ENCODE measurements at regions of chr2 and their contacts with region 1.

Region 1: GRCh38 chr2:24874035-24874434 is 46.0 kb downstream of the ADCY3 start:
- DNase-seq: no peak
- H3K4me3 ChIP-seq: no peak overlapping the region
- H3K27ac ChIP-seq: no peak overlapping the region
- H3K4me1 ChIP-seq: no peaks in the 10 kb centered on the region
- H3K27me3 ChIP-seq: no peaks in the 10 kb centered on the region

Region 2: GRCh38 chr2:24783641-24784040 is 90.4 kb before region 1 on chr2:
- CTCF ChIA-PET with region 1: no interaction called
- POLR2A ChIA-PET with region 1: no interaction called
- DNase-seq: no peak
- H3K4me3 ChIP-seq: no peak overlapping the region
- H3K27ac ChIP-seq: no peak overlapping the region
- H3K4me1 ChIP-seq: peaks cover 0 to 20% (median 15%) of the 10 kb centered on the region in 4 experiments
- H3K27me3 ChIP-seq: peaks cover 0 to 21% (median 5%) of the 10 kb centered on the region in 5 experiments

Region 3: DNA sequence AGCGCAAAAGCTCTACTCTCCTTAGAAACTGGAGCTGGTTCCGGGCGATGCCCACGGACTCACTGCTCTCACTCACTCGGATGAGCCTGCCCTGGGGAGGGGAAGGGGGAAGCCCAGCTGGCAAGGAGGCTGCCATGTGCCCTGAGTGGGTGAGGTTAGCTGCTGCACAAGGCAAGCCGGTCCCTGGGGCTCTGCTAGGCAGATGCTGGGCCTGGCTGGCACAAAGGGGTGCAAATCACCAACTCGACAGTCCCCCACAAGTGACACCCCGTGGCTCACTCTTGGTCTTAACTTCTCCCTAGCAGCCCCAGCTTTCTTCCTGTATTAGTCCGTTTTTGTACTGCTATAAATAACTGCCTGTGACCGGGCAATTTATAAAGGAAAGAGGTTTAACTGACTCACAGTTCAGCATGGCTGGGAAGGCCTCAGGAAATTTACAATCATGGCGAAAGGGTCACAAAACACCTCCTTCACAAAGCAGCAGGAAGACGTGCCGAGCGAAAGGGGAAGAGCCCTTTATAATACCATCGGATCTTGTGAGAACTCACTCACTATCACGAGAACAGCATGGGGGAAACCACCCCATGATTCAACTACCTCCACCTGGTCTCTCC is 12.8 kb after region 1 on chr2:
- CTCF ChIA-PET with region 1: interaction called, 10 read pairs
- POLR2A ChIA-PET with region 1: interaction called, 4 read pairs
- DNase-seq: peak; percentile 58 to 92 (median 87)
- H3K4me3 ChIP-seq: peak overlapping the region in 5 of 7 experiments; percentile 36 to 59 (median 53)
- H3K27ac ChIP-seq: peak overlapping the region; percentile 68 to 75
- H3K4me1 ChIP-seq: peaks cover 3 to 60% (median 51%) of the 10 kb centered on the region in 4 experiments
- H3K27me3 ChIP-seq: no peaks in the 10 kb centered on the region